Endothelial cell of umbilical vein (primary cell): ENCODE measurements at regions of chr11 and their contacts with region 1.

Region 1: GRCh38 chr11:120391292-120391691 is 55.1 kb downstream of the ARHGEF12 start:
- DNase-seq: peak; percentile 74
- H3K4me3 ChIP-seq: no peak overlapping the region
- H3K27ac ChIP-seq: no peak overlapping the region
- H3K4me1 ChIP-seq: peaks cover 23% of the 10 kb centered on the region
- H3K27me3 ChIP-seq: no peaks in the 10 kb centered on the region
- CTCF ChIP-seq: no peak
- POLR2A ChIP-seq: no peak

Region 2: DNA sequence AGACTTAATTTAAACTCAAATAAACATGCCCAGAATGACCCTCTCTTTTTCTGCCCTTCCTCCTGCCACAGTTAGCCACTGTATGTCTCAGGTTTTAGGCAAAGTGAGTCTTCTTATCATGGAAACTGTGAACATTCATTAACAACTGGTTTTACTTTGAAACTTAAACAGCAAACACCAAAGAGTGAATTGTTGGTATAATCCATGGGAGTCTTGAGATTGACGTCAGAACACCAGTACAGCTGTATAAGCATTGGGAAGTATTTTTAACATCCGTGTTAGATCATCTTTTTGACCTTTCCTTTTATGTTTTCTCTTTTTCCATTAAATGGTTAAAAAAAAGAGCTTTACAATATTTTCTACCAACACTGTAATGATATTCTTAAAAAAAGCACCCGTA is 16.2 kb before region 1 on chr11:
- CTCF ChIA-PET with region 1: interaction called, 4 read pairs
- POLR2A ChIA-PET with region 1: no interaction called
- dilution Hi-C with region 1: no loop called
- intact Hi-C with region 1: loop called (anchors 2 kb)
- DNase-seq: peak; percentile 20
- H3K4me3 ChIP-seq: no peak overlapping the region
- H3K27ac ChIP-seq: no peak overlapping the region
- H3K4me1 ChIP-seq: peaks cover 2% of the 10 kb centered on the region
- H3K27me3 ChIP-seq: no peaks in the 10 kb centered on the region
- CTCF ChIP-seq: no peak
- POLR2A ChIP-seq: no peak

Region 3: DNA sequence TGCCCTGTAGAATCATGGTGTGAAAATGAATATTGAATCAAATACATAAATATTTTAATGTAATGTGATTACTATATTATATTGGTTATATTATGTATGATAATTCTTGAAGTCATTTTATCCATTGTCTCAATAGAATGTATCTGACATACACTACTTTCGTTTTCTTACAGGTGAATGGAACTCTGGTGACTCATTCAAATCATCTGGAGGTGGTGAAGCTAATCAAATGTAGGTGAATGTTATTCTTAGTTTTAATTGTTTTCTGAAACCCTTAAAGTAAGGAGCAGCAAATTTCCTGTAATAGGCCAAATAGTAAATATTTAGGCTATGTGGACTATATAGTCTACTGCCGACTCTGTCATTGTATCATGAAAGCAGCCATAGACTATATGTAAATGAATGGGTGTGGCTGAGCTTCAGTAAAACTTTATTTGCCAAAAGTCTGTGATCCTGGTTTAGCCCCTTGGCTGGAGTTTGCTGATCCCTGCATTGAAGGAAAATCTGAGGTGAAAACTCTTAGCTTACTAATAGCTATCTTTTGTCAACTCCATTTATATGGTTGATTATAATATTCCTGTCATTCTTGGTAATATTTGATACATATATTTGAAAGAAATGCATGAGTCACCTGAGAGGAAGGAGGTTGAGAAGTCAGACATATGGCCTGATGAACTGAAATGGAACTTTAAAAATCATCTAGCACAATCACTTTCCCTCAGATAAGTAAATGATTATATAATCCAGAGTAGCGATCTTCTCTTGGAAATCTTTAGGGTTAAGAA is 33.1 kb after region 1 on chr11:
- CTCF ChIA-PET with region 1: interaction called, 3 read pairs
- POLR2A ChIA-PET with region 1: no interaction called
- dilution Hi-C with region 1: no loop called
- intact Hi-C with region 1: loop called (anchors 2 kb)
- DNase-seq: peak; percentile 34
- H3K4me3 ChIP-seq: no peak overlapping the region
- H3K27ac ChIP-seq: no peak overlapping the region
- H3K4me1 ChIP-seq: peaks cover 16% of the 10 kb centered on the region
- H3K27me3 ChIP-seq: no peaks in the 10 kb centered on the region
- CTCF ChIP-seq: no peak
- POLR2A ChIP-seq: no peak